Left cardiac atrium (tissue), 4 donors: ENCODE measurements at regions of chr2 and their contacts with region 1.

Region 1: GRCh38 chr2:44348400-44348799 is 12.9 kb downstream of the PREPL start:
- DNase-seq: peak; percentile 36
- ATAC-seq: peak; percentile 75 to 93

Region 2: DNA sequence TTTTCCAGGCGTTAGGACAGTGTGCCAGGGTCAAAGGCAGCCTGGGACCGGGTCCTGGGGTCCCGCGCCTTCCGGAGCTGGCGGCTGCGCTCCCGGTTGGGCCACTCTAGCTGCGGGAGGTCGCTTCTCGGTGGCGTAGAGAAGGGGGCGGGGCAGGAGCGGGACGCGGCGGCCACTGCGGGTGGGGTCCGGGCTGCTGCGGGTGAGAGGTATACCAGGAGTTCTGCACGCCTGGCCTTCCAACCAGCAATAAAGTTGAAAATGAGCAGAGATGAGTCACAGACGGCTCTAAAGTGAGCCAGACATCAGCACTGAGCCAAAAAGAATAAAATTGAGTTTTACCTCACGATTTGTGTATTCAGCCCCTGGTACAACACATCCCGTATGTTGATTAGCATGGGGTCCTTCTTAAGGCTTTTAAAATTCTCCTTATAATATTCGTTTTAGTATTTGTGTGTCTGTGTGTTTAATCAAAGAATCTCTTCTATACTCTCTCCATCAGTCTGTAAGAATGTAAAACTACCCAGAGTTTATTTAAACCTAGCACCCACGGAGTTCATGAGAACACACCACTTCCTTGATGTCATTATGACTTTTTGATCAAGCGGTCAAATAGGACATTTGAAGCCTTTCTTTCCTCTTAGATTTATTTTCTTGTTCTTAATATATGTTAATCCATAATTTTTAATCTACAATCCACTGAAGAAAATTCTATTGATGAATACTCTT is 671.9 kb before region 1 on chr2 and contains the start of gene C1GALT1C1L:
- intact Hi-C with region 1: no loop called
- DNase-seq: peak; percentile 71
- ATAC-seq: peak; percentile 97 to 98
- total RNA-seq, gene C1GALT1C1L: 2.7 to 2.8 TPM

Region 3: DNA sequence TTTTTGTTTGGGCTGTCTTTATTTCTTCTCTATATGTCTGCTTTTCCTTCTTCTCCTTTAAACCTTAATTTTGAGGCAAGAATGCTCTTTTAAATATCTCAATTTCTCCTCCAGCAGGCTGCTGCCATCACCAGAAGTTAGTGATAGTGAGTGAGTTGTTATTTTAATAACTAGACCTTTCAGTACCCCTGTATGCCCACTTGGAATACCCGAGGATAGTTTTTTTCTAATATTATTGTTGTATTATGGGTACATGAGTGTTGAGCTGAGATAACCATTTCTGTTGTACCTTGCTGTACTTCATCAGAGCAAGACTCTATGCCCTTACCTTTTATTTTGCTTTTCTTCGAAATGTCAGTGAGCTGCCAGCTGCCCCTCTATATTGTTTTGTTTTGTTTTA is 129.6 kb before region 1 on chr2:
- intact Hi-C with region 1: no loop called
- DNase-seq: no peak
- ATAC-seq: no peak

Region 4: DNA sequence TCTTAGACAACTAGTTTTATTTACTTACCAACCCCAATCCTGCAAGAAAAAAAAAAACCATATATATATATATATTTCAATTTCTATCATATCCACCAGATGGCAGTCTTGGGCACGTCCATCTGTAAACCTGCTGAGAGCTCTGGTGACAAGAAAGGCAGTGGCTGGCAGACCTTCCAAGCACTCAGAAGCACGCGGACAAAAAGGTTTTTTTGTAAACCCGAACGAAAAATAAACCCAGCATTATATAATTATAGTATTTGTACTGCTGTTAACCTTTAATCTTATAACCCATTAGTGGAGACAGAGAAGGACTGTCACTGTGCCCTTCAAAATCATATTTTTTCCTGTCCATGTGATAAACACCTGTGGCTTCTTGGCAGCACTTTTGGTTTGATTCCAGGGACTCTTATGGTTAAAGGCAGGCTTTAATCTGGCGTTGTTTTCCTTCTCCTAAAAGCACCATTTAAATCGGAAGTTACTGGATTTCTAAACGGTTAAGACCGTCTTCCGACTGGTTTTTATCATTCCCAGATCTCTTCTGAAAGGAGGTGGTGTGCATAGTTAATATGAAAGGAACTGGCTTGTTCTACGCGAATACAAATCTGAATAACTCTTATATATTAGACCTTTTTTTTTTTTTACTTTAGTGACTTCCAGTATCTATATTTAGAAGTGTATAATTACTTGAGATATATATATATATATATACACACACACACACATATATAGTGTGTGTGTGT is 104.1 kb before region 1 on chr2:
- intact Hi-C with region 1: loop called in 1 of 2 experiments (anchors 5 kb)
- DNase-seq: peak; percentile 59
- ATAC-seq: peak; percentile 68 to 76